ENCODE measurements at regions of chr12 and their contacts with region 1.

Region 1: GRCh38 chr12:69068431-69068830 is 135.5 kb upstream of the CPM start:
- DNase-seq: no peak
- ATAC-seq: no peak

Region 2: DNA sequence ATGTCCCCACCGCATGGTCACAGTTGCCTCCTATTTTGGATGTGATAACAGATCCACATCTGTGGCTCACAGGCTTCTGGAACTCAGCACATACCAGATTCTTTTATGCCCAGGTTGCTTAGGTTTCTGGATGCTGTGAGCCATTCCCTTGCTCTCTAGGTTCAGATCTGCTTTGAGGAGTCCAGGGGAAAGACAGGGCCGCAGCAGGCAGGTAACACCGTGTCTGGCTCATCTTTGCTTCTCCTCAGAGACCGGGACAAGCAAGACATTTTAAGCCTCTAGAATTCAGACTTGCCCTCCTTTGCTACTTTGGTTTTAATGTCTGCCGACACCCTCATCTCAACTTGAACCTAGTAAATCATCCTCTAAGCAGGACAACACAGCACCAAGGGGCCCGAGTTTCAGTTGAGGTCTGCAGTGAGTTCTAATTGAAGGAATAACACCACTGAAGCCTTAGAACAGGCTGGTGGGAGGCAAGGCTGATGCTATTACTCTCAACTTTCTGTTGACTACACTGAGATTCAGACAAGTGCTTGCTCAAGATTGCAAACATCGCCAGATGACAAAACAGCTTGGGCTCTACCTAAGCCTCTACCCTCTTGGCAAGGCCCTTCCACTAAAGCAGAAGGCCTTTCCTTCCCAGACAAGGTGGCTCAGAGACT is 205.2 kb before region 1 on chr12:
- intact Hi-C with region 1: loop called (anchors 5 kb)
- DNase-seq: no peak
- ATAC-seq: no peak